IMR-90 (cell line): ENCODE measurements at regions of chr1 and their contacts with region 1.

Region 1: DNA sequence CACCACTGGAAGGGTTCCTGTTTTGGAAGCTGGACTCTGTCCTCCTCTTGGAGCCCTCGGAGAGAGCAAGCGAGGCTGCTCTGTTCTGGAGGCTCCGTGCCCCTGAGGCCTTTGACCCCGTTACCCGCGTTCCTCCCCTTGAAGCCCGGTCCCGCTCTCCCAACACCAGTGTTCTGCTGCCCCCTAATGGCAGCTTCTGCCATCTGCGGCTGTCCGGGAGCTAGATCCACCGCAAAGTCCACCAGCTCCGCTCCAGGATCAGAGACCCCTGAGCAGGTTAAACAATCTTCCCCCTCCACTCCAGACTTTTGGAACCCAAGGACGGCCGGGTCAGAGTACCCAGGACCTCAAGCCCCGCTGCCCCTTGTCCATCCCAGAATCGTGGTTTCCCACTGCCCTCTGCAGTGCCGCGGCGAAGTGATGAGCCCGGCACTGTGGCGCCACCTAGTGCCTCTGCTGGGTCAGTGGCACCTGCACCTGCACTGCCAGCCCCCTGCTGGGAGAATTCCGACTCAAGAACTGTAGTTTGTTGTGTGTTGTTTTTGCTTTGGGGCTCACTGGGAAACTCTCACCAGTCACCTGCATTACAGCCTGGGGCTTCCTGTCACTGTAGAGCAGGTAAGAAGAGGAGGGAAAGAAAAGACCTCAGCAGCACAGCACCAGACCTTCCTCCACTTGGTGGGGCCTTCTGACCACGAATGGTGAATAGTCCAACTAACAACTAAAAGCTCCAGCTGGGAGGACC is 63.5 kb upstream of the NFASC start:
- DNase-seq: peak; percentile 57
- ATAC-seq: peak; percentile 96
- H3K4me3 ChIP-seq: peak overlapping the region; percentile 38
- H3K27ac ChIP-seq: no peak overlapping the region
- H3K4me1 ChIP-seq: no peaks in the 10 kb centered on the region
- H3K27me3 ChIP-seq: no peaks in the 10 kb centered on the region; the same call in 1 of the 2 replicates
- CTCF ChIP-seq: peak; percentile 85
- POLR2A ChIP-seq: no peak
- RAD21 ChIP-seq: peak; percentile 64

Region 2: GRCh38 chr1:204506961-204507387 is 300.1 kb before region 1 on chr1:
- CTCF ChIA-PET with region 1: interaction called, 9 read pairs
- POLR2A ChIA-PET with region 1: no interaction called
- dilution Hi-C with region 1: no loop called
- in situ Hi-C with region 1: no loop called
- intact Hi-C with region 1: loop called (anchors 2 kb)
- DNase-seq: peak; percentile 92
- ATAC-seq: peak; percentile 89
- H3K4me3 ChIP-seq: peak overlapping the region; percentile 48
- H3K27ac ChIP-seq: peak overlapping the region; percentile 49
- H3K4me1 ChIP-seq: no peaks in the 10 kb centered on the region
- H3K27me3 ChIP-seq: no peaks in the 10 kb centered on the region
- CTCF ChIP-seq: no peak
- POLR2A ChIP-seq: no peak; the same call in 1 of the 2 replicates
- RAD21 ChIP-seq: no peak

Region 3: GRCh38 chr1:204565617-204566582 is 241.2 kb before region 1 on chr1:
- CTCF ChIA-PET with region 1: interaction called, 41 read pairs
- POLR2A ChIA-PET with region 1: no interaction called
- dilution Hi-C with region 1: no loop called
- in situ Hi-C with region 1: loop called (anchors 5 kb)
- intact Hi-C with region 1: loop called (anchors 1 kb)
- DNase-seq: peak; percentile 81
- ATAC-seq: peak; percentile 95
- H3K4me3 ChIP-seq: no peak overlapping the region
- H3K27ac ChIP-seq: no peak overlapping the region
- H3K4me1 ChIP-seq: no peaks in the 10 kb centered on the region
- H3K27me3 ChIP-seq: no peaks in the 10 kb centered on the region
- CTCF ChIP-seq: peak; percentile 80
- POLR2A ChIP-seq: no peak
- RAD21 ChIP-seq: peak; percentile 82

Region 4: GRCh38 chr1:204791453-204792353 is 15.4 kb before region 1 on chr1:
- CTCF ChIA-PET with region 1: interaction called, 24 read pairs
- POLR2A ChIA-PET with region 1: no interaction called
- dilution Hi-C with region 1: no loop called
- in situ Hi-C with region 1: no loop called
- intact Hi-C with region 1: no loop called
- DNase-seq: peak; percentile 35
- ATAC-seq: peak; percentile 51; the same call in 1 of the 2 replicates
- H3K4me3 ChIP-seq: no peak overlapping the region
- H3K27ac ChIP-seq: no peak overlapping the region
- H3K4me1 ChIP-seq: no peaks in the 10 kb centered on the region
- H3K27me3 ChIP-seq: no peaks in the 10 kb centered on the region; the same call in none of the 2 replicates
- CTCF ChIP-seq: peak; percentile 52
- POLR2A ChIP-seq: no peak
- RAD21 ChIP-seq: no peak; the same call in 1 of the 2 replicates

Region 5: GRCh38 chr1:204885288-204885711 is 78.2 kb after region 1 on chr1:
- CTCF ChIA-PET with region 1: no interaction called
- POLR2A ChIA-PET with region 1: no interaction called
- dilution Hi-C with region 1: no loop called
- in situ Hi-C with region 1: no loop called
- intact Hi-C with region 1: no loop called
- DNase-seq: no peak
- ATAC-seq: peak; percentile 51
- H3K4me3 ChIP-seq: no peak overlapping the region
- H3K27ac ChIP-seq: no peak overlapping the region
- H3K4me1 ChIP-seq: no peaks in the 10 kb centered on the region
- H3K27me3 ChIP-seq: peaks cover 12% of the 10 kb centered on the region
- CTCF ChIP-seq: no peak
- POLR2A ChIP-seq: no peak
- RAD21 ChIP-seq: no peak

Region 6: GRCh38 chr1:204941421-204942338 is 134.6 kb after region 1 on chr1:
- CTCF ChIA-PET with region 1: interaction called, 3 read pairs
- POLR2A ChIA-PET with region 1: no interaction called
- dilution Hi-C with region 1: no loop called
- in situ Hi-C with region 1: no loop called
- intact Hi-C with region 1: loop called (anchors 1 kb)
- DNase-seq: peak; percentile 31
- ATAC-seq: peak; percentile 77
- H3K4me3 ChIP-seq: no peak overlapping the region
- H3K27ac ChIP-seq: no peak overlapping the region
- H3K4me1 ChIP-seq: no peaks in the 10 kb centered on the region
- H3K27me3 ChIP-seq: peaks cover 9% of the 10 kb centered on the region
- CTCF ChIP-seq: peak; percentile 61
- POLR2A ChIP-seq: no peak
- RAD21 ChIP-seq: peak; percentile 47

Region 7: GRCh38 chr1:204989266-204990058 is 182.3 kb after region 1 on chr1:
- CTCF ChIA-PET with region 1: no interaction called
- POLR2A ChIA-PET with region 1: no interaction called
- dilution Hi-C with region 1: no loop called
- in situ Hi-C with region 1: no loop called
- intact Hi-C with region 1: no loop called
- DNase-seq: peak; percentile 67
- ATAC-seq: peak; percentile 98
- H3K4me3 ChIP-seq: no peak overlapping the region
- H3K27ac ChIP-seq: no peak overlapping the region
- H3K4me1 ChIP-seq: no peaks in the 10 kb centered on the region
- H3K27me3 ChIP-seq: peaks cover 47% of the 10 kb centered on the region
- CTCF ChIP-seq: peak; percentile 97
- POLR2A ChIP-seq: no peak
- RAD21 ChIP-seq: peak; percentile 97

Region 8: DNA sequence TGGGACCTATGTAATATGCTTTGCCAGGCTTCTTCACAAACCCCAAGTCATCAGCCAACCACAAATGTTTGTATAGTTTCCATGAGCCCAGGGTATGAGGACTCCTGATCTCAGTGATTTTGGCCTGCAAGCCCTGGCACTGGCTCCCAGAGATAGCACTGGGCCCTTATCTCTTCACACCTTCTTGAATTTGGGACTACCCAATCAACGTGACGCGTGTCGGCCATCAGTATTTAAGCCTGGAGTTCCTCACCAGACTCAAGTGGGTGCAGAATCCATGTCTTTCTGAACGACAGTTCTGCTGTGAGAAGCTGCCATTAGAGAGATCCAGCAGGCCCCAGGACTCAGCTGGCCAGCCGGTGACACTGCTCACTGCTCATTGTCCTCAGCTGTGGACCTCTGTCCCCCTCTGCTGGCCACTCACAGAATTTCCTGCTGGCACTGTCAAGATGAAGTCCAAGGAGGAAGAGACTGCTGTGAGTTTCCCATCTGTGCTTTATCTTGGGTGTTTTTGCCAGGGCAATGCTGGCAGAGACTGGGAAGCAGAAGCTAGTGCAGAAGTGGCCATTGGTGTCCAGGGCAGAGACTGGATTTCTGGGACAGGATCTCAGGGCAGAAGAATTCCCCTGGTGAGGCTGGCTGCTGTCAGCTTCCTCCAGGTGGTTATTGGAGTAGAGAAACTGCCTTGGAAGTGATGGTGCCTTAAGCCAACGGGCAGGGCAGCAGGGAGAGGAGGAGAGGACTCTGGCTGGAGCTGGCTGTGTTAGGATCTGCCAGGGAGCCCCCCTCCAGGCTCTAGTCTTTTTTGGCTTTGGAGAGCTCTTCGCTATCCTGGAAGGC is 449.0 kb after region 1 on chr1:
- CTCF ChIA-PET with region 1: interaction called, 6 read pairs
- POLR2A ChIA-PET with region 1: no interaction called
- dilution Hi-C with region 1: no loop called
- in situ Hi-C with region 1: loop called (anchors 25 kb)
- intact Hi-C with region 1: loop called (anchors 2 kb)
- DNase-seq: peak; percentile 80
- ATAC-seq: peak; percentile 98
- H3K4me3 ChIP-seq: no peak overlapping the region
- H3K27ac ChIP-seq: no peak overlapping the region
- H3K4me1 ChIP-seq: peaks cover 10% of the 10 kb centered on the region
- H3K27me3 ChIP-seq: no peaks in the 10 kb centered on the region
- CTCF ChIP-seq: peak; percentile 98
- POLR2A ChIP-seq: no peak
- RAD21 ChIP-seq: peak; percentile 99